ENCODE measurements at regions of chr2 and their contacts with region 1.

Region 1: GRCh38 chr2:20584637-20585321 is 66.1 kb downstream of the HS1BP3 start:
- DNase-seq: peak; percentile 98
- ATAC-seq: peak; percentile 79
- H3K4me3 ChIP-seq: peak overlapping the region in 1 of 3 experiments; percentile 52; a peak in 2 of 6 replicates
- H3K27ac ChIP-seq: peak overlapping the region; percentile 97
- H3K4me1 ChIP-seq: peaks cover 100% of the 10 kb centered on the region
- H3K27me3 ChIP-seq: no peaks in the 10 kb centered on the region
- CTCF ChIP-seq: peak; percentile 41; the same call in 1 of the 2 replicates
- EP300 ChIP-seq: peak; percentile 63 to 88; a peak in 3 of 4 replicates
- POLR2A ChIP-seq: peak in 1 of 2 experiments; percentile 73; a peak in 1 of 4 replicates
- RAD21 ChIP-seq: peak; percentile 58

Region 2: GRCh38 chr2:20525041-20526035 is 59.4 kb before region 1 on chr2:
- CTCF ChIA-PET with region 1: no interaction called
- POLR2A ChIA-PET with region 1: interaction called, 68 read pairs
- in situ Hi-C with region 1: no loop called
- intact Hi-C with region 1: loop called (anchors 1 kb)
- DNase-seq: peak; percentile 96
- ATAC-seq: peak; percentile 96
- H3K4me3 ChIP-seq: peak overlapping the region; percentile 2 to 56 (median 21); a peak in 5 of 6 replicates
- H3K27ac ChIP-seq: peak overlapping the region; percentile 69
- H3K4me1 ChIP-seq: peaks cover 81% of the 10 kb centered on the region
- H3K27me3 ChIP-seq: no peaks in the 10 kb centered on the region
- CTCF ChIP-seq: peak; percentile 80
- EP300 ChIP-seq: peak; percentile 48 to 53; a peak in 3 of 4 replicates
- POLR2A ChIP-seq: peak in 1 of 2 experiments; percentile 70; a peak in 2 of 4 replicates
- RAD21 ChIP-seq: peak; percentile 82

Region 3: GRCh38 chr2:20561701-20562454 is 22.9 kb before region 1 on chr2:
- CTCF ChIA-PET with region 1: no interaction called
- POLR2A ChIA-PET with region 1: interaction called, 32 read pairs
- in situ Hi-C with region 1: no loop called
- intact Hi-C with region 1: no loop called
- DNase-seq: no peak
- ATAC-seq: no peak
- H3K4me3 ChIP-seq: no peak overlapping the region
- H3K27ac ChIP-seq: no peak overlapping the region
- H3K4me1 ChIP-seq: peaks cover 55% of the 10 kb centered on the region
- H3K27me3 ChIP-seq: no peaks in the 10 kb centered on the region
- CTCF ChIP-seq: no peak
- EP300 ChIP-seq: no peak
- POLR2A ChIP-seq: no peak
- RAD21 ChIP-seq: no peak

Region 4: GRCh38 chr2:20595431-20596192 is 10.8 kb after region 1 on chr2:
- CTCF ChIA-PET with region 1: interaction called, 4 read pairs
- POLR2A ChIA-PET with region 1: interaction called, 409 read pairs
- in situ Hi-C with region 1: no loop called
- intact Hi-C with region 1: loop called (anchors 1 kb)
- DNase-seq: peak; percentile 66
- ATAC-seq: no peak
- H3K4me3 ChIP-seq: no peak overlapping the region
- H3K27ac ChIP-seq: peak overlapping the region; percentile 97
- H3K4me1 ChIP-seq: peaks cover 98% of the 10 kb centered on the region
- H3K27me3 ChIP-seq: no peaks in the 10 kb centered on the region; a peak in 1 of 5 replicates
- CTCF ChIP-seq: no peak
- EP300 ChIP-seq: peak in 1 of 2 experiments; percentile 62; a peak in 1 of 4 replicates
- POLR2A ChIP-seq: peak in 1 of 2 experiments; percentile 4; a peak in 1 of 4 replicates
- RAD21 ChIP-seq: peak; percentile 33; the same call in 1 of the 2 replicates

Region 5: GRCh38 chr2:20617892-20618467 is 33.2 kb after region 1 on chr2:
- CTCF ChIA-PET with region 1: no interaction called
- POLR2A ChIA-PET with region 1: interaction called, 30 read pairs
- in situ Hi-C with region 1: no loop called
- intact Hi-C with region 1: loop called (anchors 1 kb)
- DNase-seq: peak; percentile 94
- ATAC-seq: peak; percentile 92
- H3K4me3 ChIP-seq: no peak overlapping the region
- H3K27ac ChIP-seq: peak overlapping the region; percentile 95
- H3K4me1 ChIP-seq: peaks cover 63% of the 10 kb centered on the region
- H3K27me3 ChIP-seq: no peaks in the 10 kb centered on the region
- CTCF ChIP-seq: peak; percentile 60
- EP300 ChIP-seq: peak; percentile 49 to 56; a peak in 2 of 4 replicates
- POLR2A ChIP-seq: peak in 1 of 2 experiments; percentile 53; a peak in 1 of 4 replicates
- RAD21 ChIP-seq: peak; percentile 92

Region 6: DNA sequence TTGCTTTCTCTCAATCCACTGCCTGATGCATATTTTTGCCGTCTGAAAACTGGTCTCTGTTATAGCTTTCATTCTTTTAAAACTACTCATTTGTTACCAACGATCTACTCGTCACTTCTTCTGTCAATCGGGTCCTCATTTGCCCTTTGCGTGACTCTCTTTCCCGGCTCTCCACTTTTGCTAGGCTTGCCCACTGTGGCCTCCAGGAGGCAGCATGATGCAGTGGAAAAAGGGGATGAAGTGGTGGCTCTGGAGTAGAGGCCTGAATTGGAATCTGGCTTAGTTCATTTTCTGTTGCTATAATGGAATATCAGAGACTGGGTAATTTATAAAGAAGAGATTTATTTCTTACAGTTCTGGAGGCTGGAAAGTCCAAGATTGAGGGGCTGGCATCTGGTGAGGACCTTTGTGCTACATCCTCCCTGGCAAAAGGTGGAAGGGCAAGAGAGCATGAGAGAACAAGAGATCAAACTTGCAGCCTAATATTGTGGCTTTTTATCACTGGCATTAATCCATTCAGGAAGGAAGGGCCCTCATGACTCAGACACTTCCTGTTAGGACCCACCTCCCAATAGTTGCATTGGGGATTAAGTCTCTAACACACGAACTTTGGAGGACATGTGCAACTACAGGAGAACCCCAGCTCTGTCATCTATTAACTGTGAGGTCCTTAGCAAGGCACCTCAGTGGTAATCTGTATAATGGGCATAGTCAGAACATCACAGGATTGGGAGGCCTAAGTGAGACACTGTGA is 97.6 kb after region 1 on chr2:
- CTCF ChIA-PET with region 1: no interaction called
- POLR2A ChIA-PET with region 1: no interaction called
- in situ Hi-C with region 1: no loop called
- intact Hi-C with region 1: no loop called
- DNase-seq: peak; percentile 47
- ATAC-seq: peak; percentile 43
- H3K4me3 ChIP-seq: no peak overlapping the region
- H3K27ac ChIP-seq: no peak overlapping the region
- H3K4me1 ChIP-seq: peaks cover 31% of the 10 kb centered on the region
- H3K27me3 ChIP-seq: no peaks in the 10 kb centered on the region
- CTCF ChIP-seq: peak; percentile 82
- EP300 ChIP-seq: no peak
- POLR2A ChIP-seq: no peak
- RAD21 ChIP-seq: peak; percentile 82